Posterior vena cava (tissue), 2 donors: ENCODE measurements at regions of chr12 and their contacts with region 1.

Region 1: DNA sequence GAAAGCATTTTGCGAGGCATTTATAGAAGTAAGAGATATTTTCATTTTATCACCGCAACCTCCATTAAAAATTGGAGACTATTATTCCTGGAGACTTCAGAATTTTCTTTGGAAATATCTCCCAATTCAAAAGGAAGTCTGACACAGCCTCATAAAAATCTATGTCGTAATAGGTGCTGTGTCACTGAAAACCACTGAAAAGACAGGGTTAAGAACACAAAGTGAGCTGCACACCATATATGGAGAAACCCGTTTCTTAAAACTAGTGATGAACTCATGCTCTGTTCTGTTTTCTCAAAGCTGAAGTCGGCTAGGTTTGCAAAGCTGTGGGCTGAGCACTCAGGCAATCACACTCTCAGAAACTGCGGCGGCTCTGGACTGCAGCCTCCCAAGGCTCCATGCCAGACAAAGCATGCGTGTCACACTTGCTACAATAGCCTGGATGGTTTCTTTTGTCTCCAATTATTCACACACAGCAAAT is at the start of gene GLIPR1:
- DNase-seq: peak; percentile 92
- total RNA-seq, gene GLIPR1: 57.2 to 68.0 TPM

Region 2: DNA sequence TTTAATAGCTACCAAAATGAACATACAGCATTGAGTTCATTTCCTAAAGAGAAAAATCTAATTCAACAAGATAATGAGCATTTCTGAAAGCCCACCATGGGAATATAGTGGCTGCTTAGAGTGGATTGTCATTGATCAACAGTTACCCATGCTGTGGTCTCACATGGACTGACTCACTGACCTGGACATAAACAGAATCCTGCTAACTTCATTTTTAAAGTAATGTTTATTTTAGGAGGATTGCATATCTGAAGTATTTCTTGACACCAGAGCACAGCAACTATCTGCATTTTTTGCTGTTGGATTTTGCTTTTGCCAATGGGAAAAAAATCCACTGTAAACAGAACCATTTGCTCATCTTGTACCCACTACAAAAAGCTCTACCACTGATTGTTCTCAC is 342.6 kb before region 1 on chr12:
- intact Hi-C with region 1: no loop called
- DNase-seq: no peak

Region 3: GRCh38 chr12:75334384-75335030 is 146.0 kb before region 1 on chr12 and contains the start of gene GLIPR1L1:
- intact Hi-C with region 1: loop called in 1 of 2 experiments (anchors 10 kb)
- DNase-seq: peak; percentile 91
- total RNA-seq, gene GLIPR1L1: not detected

Region 4: GRCh38 chr12:75390899-75391538 is 89.5 kb before region 1 on chr12 and contains the start of gene GLIPR1L2:
- intact Hi-C with region 1: loop called in 1 of 2 experiments (anchors 10 kb)
- DNase-seq: peak; percentile 98
- total RNA-seq, gene GLIPR1L2: 0.38 to 0.65 TPM

Region 5: DNA sequence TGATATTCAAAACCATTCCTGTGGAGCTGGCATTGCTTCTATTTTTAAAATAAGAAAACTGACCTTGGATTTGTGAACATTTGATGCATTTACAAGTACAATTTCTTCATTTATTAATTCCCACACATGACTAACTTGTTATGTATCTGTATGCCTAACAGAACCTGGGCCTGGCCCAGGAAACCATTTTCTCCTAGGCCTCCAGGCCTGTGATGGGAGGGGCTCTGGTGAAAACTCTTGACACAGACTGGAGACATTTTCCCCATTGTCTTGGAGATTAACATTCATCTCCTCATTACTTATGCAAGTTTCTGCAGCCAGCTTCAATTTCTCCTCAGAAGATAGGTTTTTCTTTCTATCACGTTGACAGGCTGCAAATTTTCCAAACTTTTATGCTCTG is 47.6 kb before region 1 on chr12:
- intact Hi-C with region 1: no loop called
- DNase-seq: no peak